Activated T-helper 1 cell treated with anti-CD3 and anti-CD28 coated beads, Interleukin-12 subunit alpha, Interleukin-12 subunit beta, Interleukin-2, Interleukin-4 antibody, amounts not matched to agents 30 ng/mL and 10 ng/mL and 1 ng/mL, durations not matched to agents 14 hours and 24 hours and 36 hours (primary cell): ENCODE measurements at regions of chr13 and their contacts with region 1.

Region 1: DNA sequence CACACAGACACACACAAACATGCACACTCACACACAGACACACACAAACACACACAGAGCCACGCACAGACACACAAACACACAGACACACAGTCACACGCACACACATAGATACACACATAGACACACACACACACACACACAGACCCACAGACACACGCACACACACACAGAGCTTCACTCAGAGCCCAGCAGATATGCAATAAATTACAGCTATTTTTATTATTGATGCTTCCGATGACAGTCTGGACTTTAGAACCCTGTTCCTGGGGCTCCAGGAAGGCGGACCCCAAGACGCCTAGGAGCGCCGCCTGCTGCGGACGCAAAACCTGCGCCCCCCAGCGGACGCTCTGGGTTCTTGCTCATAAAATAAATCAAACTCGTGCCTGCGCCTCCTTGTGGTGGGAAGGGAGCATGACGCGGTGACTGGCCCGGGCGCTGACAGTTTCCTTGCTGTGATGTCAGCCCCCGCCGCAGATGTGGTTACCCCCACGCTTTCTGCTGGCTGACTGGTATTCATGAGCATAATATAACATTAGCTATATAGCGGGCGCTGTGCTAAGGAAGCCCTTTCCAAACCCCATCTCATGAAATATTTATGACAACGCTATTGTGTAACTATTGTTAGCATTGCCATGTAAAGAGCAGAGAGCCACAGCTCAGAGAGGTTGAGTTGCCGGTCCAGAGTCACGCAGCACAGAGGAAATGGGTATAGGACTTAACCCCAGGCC is 64.4 kb upstream of the TM9SF2 start:
- DNase-seq: peak; percentile 88
- H3K4me3 Mint-ChIP-seq: peak overlapping the region; percentile 40
- H3K27ac Mint-ChIP-seq: peak overlapping the region; percentile 65
- H3K4me1 Mint-ChIP-seq: peaks cover 60% of the 10 kb centered on the region
- H3K27me3 Mint-ChIP-seq: peaks cover 29% of the 10 kb centered on the region

Region 2: DNA sequence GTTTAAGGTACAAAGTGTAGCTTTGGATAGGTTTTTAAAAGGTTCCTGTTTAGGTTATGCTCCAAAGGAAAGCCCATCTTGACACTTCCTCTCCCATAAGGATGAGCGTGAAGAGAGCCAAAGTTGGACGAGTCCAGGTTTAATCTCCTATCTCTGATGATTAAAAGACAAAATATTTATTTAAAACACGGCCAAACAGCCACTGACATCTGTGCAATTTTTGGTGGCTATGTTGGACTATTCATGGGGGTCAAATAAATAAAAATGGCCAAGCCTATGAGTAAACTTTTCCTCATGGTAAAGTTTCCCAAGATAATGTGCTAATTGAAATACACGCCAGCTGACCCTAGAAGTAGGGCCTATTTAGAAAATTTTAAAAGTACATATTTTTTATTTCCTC is 390.0 kb before region 1 on chr13:
- intact Hi-C with region 1: loop called (anchors 2 kb)
- DNase-seq: no peak
- H3K4me3 Mint-ChIP-seq: peak overlapping the region; percentile 68
- H3K27ac Mint-ChIP-seq: peak overlapping the region; percentile 91
- H3K4me1 Mint-ChIP-seq: peaks cover 93% of the 10 kb centered on the region
- H3K27me3 Mint-ChIP-seq: no peaks in the 10 kb centered on the region

Region 3: DNA sequence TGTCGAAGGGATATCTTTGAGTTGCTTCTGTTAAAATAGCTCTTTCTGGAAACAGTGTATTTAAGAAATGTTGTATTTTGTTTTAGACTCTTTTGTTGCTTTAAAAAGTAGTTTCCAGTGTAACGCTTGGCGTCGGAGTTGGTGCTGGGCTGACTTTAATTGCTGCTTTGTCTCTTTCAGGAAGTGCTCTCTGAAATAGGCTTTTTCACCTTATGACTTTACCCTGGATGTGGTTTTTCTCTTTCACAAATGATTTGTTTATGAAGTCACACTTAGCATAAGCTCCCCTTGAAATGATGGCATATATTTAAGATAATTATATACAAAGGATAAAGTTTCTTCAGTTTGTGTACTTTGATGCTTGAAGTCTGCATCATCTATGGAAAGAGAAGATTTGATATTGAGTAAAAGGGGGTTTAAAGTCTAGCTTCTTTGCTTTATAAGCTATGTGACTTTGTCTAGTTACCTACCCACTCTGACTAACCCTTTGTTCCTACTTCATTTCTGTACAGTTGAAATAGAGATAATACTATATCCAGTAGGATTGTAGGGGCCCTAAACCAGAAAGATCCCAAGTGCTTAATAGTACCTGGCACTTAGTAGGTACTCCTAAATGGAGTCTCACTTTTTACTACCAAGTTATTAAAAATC is 178.5 kb before region 1 on chr13 and contains the start of gene GPR18:
- intact Hi-C with region 1: loop called (anchors 1 kb)
- DNase-seq: no peak
- H3K4me3 Mint-ChIP-seq: peak within 1 kb of the TSS; percentile 88
- H3K27ac Mint-ChIP-seq: peak within 1 kb of the TSS; percentile 89
- H3K4me1 Mint-ChIP-seq: peaks cover 66% of the 10 kb centered on the region
- H3K27me3 Mint-ChIP-seq: no peaks in the 10 kb centered on the region
- total RNA-seq, gene GPR18: 12.0 and 15.9 TPM in 2 replicates

Region 4: GRCh38 chr13:99314640-99315176 is 122.1 kb before region 1 on chr13:
- intact Hi-C with region 1: loop called (anchors 2 kb)
- DNase-seq: peak; percentile 54
- H3K4me3 Mint-ChIP-seq: peak overlapping the region; percentile 57
- H3K27ac Mint-ChIP-seq: peak overlapping the region; percentile 96
- H3K4me1 Mint-ChIP-seq: peaks cover 80% of the 10 kb centered on the region
- H3K27me3 Mint-ChIP-seq: no peaks in the 10 kb centered on the region

Region 5: GRCh38 chr13:99417201-99418102 is 19.4 kb before region 1 on chr13:
- intact Hi-C with region 1: loop called (anchors 1 kb)
- DNase-seq: no peak
- H3K4me3 Mint-ChIP-seq: no peak overlapping the region
- H3K27ac Mint-ChIP-seq: no peak overlapping the region
- H3K4me1 Mint-ChIP-seq: peaks cover 46% of the 10 kb centered on the region
- H3K27me3 Mint-ChIP-seq: peaks cover 7% of the 10 kb centered on the region

Region 6: DNA sequence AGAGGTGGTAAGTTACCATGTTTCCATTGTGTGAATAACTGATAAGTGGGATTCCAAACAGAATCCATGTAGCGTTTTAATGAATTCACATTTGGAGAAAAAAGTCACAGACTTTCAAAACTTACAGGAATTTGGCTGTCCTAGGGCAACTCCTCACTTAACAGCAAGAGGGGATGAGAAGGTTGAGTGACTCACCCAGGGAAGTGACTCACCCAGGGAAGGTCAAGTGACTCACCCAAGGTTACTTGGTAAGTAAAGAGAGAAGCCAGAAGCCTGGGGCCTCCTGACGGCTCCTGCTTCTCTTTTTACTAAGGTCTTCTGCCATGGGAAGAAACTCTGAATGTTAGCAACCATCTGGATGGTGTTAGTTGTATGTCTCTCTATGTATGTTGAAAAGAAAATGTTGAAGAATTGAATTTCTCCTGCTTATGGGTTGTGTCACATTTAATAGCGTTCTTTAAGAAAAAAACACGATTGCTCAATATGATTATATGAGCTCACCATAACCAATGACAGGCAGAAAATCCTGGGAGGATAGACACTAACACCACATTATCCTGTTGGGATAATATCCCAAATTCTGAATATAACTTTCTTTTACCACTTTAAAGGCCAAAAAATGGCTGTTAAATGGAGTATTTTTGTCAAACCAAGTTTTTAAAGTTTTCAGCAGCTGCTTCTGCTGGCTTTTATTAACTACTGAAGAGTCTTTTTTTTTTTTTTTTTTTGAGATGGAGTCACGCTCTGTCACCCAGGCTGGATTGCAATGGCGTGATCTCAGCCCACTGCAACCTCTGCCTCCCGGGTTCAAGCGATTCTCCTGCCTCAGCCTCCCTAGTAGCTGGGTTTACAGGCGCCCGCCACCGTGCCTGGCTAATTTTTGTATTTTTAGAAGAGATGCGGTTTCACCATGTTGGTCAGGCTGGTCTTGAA is 956.1 kb after region 1 on chr13:
- intact Hi-C with region 1: loop called (anchors 2 kb)
- DNase-seq: peak; percentile 60
- H3K4me3 Mint-ChIP-seq: peak overlapping the region; percentile 53
- H3K27ac Mint-ChIP-seq: peak overlapping the region; percentile 93
- H3K4me1 Mint-ChIP-seq: peaks cover 38% of the 10 kb centered on the region
- H3K27me3 Mint-ChIP-seq: no peaks in the 10 kb centered on the region